CD8-positive, alpha-beta T cell (primary cell): ENCODE measurements at regions of chr11 and their contacts with region 1.

Region 1: DNA sequence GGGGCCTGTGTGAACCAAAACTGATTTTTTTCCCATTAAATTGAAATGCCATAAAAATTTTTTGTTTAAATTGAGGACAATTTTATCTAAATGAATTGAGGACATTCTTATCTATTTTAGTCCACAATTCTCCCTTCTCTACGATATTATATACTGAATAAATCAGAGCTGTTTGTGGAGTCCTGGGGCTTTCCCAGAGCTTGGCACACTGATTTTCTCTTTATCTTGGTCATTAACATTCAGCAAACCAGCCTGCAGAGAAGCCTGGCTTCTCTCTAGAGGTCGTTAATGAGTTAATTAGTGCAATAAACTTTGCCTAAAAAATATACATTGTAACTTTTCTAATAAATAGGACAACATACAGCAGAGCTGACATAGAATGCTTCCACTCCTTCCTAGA is 615.7 kb downstream of the NELL1 start:
- DNase-seq: no peak
- ATAC-seq: no peak
- H3K4me3 ChIP-seq: no peak overlapping the region
- H3K4me3 Mint-ChIP-seq: no peak overlapping the region
- H3K27ac ChIP-seq: no peak overlapping the region
- H3K27ac Mint-ChIP-seq: no peak overlapping the region
- H3K4me1 ChIP-seq: no peaks in the 10 kb centered on the region
- H3K4me1 Mint-ChIP-seq: no peaks in the 10 kb centered on the region
- H3K27me3 ChIP-seq: no peaks in the 10 kb centered on the region
- H3K27me3 Mint-ChIP-seq: no peaks in the 10 kb centered on the region
- CTCF ChIP-seq: no peak

Region 2: DNA sequence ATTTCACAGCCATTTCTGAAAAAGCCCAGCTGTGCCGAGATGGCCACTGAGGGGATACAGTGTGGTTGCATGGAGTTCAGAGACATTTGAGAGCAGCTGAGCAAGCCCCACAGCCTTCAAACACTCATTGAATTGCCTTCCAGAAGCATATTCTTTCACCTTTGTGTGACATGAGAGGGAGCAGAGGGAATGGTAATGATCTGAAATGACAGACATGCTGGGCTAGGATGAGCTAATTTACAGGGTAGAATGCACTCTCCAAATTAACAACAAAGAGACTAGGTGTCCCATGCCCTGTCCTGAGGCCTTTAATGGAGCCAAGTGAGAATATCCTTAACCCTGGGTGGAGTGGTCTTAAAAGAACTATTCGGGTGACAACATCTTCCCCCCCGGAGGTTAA is 30.3 kb before region 1 on chr11:
- CTCF ChIA-PET with region 1: no interaction called
- POLR2A ChIA-PET with region 1: no interaction called
- intact Hi-C with region 1: loop called in 1 of 2 experiments (anchors 1 kb)
- DNase-seq: no peak
- ATAC-seq: no peak
- H3K4me3 ChIP-seq: no peak overlapping the region
- H3K4me3 Mint-ChIP-seq: no peak overlapping the region
- H3K27ac ChIP-seq: no peak overlapping the region
- H3K27ac Mint-ChIP-seq: no peak overlapping the region
- H3K4me1 ChIP-seq: no peaks in the 10 kb centered on the region
- H3K4me1 Mint-ChIP-seq: no peaks in the 10 kb centered on the region
- H3K27me3 ChIP-seq: no peaks in the 10 kb centered on the region
- H3K27me3 Mint-ChIP-seq: no peaks in the 10 kb centered on the region
- CTCF ChIP-seq: no peak